Naive thymus-derived CD8-positive, alpha-beta T cell (primary cell): ENCODE measurements at regions of chr14 and their contacts with region 1.

Region 1: DNA sequence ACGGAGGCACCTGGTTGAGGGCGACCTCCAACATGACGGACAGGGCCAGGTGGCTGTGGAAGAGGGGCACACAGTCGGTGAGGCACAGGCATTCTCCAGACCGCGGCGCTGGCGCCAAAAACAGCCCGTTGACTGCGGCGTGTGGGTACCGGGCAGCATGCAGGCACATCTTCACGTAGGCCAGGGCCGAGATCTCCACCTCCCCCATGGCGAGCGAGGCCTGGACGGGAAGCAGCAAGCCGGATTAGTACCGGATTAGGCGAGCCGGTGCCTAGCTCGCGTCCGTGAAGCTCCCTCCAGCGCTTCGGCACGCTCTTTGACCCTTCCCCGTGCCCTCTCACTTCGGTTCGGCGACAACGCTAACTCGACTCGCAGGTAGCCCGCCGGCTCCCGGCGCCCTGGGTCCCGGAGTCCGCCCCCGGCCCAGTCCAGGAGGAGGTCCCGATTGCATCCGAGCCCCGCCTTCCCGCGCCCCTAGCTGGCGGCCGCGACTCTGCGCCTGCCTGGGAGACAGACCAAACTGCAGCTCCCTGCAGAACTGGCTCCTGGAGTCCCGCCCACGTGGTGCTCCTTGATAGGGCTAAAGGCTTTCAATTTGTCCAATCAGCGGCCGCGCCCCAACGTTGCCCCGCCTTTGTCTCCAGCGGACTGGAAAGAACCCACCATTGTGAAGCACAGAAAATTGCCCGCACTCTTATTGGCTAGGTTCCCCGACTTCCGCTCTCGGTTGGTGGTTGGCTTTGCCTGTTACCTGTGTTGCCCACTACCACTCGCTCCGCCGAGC is at the start of gene EMC9:
- DNase-seq: peak; percentile 95 to 100 (median 99)
- ATAC-seq: peak; percentile 90 to 93
- H3K4me3 Mint-ChIP-seq: peak within 1 kb of the TSS; percentile 88 to 96 (median 91)
- H3K27ac Mint-ChIP-seq: peak within 1 kb of the TSS; percentile 83 to 97 (median 94)
- H3K4me1 Mint-ChIP-seq: peaks cover 31 to 88% (median 79%) of the 10 kb centered on the region in 4 donors
- H3K27me3 Mint-ChIP-seq: no peaks in the 10 kb centered on the region
- polyA plus RNA-seq, gene EMC9: 7.5 to 9.4 (median 8.4) TPM

Region 2: GRCh38 chr14:24123508-24124417 is 17.5 kb before region 1 on chr14:
- POLR2A ChIA-PET with region 1: interaction called, 177 read pairs
- DNase-seq: no peak
- ATAC-seq: no peak
- H3K4me3 Mint-ChIP-seq: no peak overlapping the region
- H3K27ac Mint-ChIP-seq: peak overlapping the region in 4 of 10 donors; percentile 19 to 71 (median 44)
- H3K4me1 Mint-ChIP-seq: peaks cover 1 to 15% (median 3%) of the 10 kb centered on the region in 4 donors
- H3K27me3 Mint-ChIP-seq: no peaks in the 10 kb centered on the region